Sigmoid colon (tissue), 7 donors: ENCODE measurements at regions of chr20 and their contacts with region 1.

Region 1: DNA sequence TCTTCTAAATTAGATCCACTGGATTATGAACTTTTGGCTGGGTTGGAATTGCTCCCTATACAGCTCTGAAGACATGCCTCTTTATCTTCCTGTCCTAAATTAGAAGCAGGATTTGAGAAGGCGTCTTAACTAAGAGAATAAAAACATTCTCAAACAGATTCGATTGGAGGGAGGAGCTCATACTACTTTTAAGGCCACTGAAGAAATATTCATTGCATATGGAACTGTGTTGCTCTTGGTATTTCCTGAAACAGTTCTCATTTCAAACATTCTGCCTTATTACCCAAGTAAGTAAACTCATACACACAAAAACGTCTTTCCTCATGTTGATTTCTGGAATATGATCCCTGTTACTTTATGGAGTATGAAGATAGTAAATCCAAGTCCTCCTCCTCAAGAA is 519.7 kb upstream of the CDH4 start:
- DNase-seq: no peak
- H3K4me3 ChIP-seq: no peak overlapping the region
- H3K27ac ChIP-seq: no peak overlapping the region
- H3K4me1 ChIP-seq: no peaks in the 10 kb centered on the region
- H3K27me3 ChIP-seq: no peaks in the 10 kb centered on the region
- CTCF ChIP-seq: no peak
- EP300 ChIP-seq: no peak
- POLR2A ChIP-seq: no peak

Region 2: GRCh38 chr20:59940174-59940971 is 791.9 kb before region 1 on chr20 and contains the starts of genes FAM217B and PPP1R3D:
- intact Hi-C with region 1: no loop called
- DNase-seq: peak; percentile 100
- H3K4me3 ChIP-seq: peak within 1 kb of the TSS; percentile 50 to 78 (median 68)
- H3K27ac ChIP-seq: peak within 1 kb of the TSS; percentile 96 to 98 (median 98)
- H3K4me1 ChIP-seq: peaks cover 0 to 67% (median 48%) of the 10 kb centered on the region in 4 donors
- H3K27me3 ChIP-seq: no peaks in the 10 kb centered on the region
- CTCF ChIP-seq: peak in 1 of 4 experiments; percentile 8
- EP300 ChIP-seq: peak in 2 of 4 donors; percentile 25 to 42
- POLR2A ChIP-seq: peak; percentile 51 to 60
- total RNA-seq, gene FAM217B: 8.3 to 19.7 (median 11.1) TPM
- total RNA-seq, gene PPP1R3D: 5.3 to 9.5 (median 8.5) TPM

Region 3: DNA sequence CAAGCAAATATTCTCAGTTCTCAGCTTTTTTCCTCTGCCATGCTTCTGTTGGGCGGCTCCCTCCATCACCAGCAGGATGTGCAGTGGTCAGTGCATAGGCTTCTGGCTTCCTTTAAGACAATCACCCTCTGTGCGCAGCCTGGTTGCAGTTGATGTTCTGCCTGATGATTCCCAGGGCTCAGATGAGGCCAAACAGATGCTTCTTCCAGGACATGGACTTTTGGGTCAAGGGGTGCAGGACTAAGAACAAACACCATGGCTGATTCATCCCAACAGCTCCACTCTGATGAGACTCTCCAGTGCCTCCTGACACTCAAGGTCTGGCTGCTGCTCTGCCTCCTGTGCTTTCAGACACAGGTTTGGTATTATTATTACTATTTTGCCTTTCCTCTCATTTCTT is 35.1 kb before region 1 on chr20:
- intact Hi-C with region 1: loop called (anchors 1 kb)
- DNase-seq: no peak
- H3K4me3 ChIP-seq: no peak overlapping the region
- H3K27ac ChIP-seq: no peak overlapping the region
- H3K4me1 ChIP-seq: no peaks in the 10 kb centered on the region
- H3K27me3 ChIP-seq: peaks cover 0 to 6% (median 0%) of the 10 kb centered on the region in 3 donors
- CTCF ChIP-seq: no peak
- EP300 ChIP-seq: no peak
- POLR2A ChIP-seq: no peak